ENCODE measurements at regions of chr10 and their contacts with region 1.

Region 1: GRCh38 chr10:89217057-89217990 is 10.2 kb upstream of the CH25H start:
- DNase-seq: no peak
- ATAC-seq: peak; percentile 55
- H3K4me3 ChIP-seq: no peak overlapping the region
- H3K27ac ChIP-seq: no peak overlapping the region
- H3K4me1 ChIP-seq: no peaks in the 10 kb centered on the region
- H3K27me3 ChIP-seq: no peaks in the 10 kb centered on the region

Region 2: GRCh38 chr10:89029785-89030437 is 187.4 kb before region 1 on chr10:
- intact Hi-C with region 1: loop called (anchors 2 kb)
- DNase-seq: peak; percentile 80 to 85
- ATAC-seq: peak; percentile 86
- H3K4me3 ChIP-seq: no peak overlapping the region
- H3K27ac ChIP-seq: no peak overlapping the region
- H3K4me1 ChIP-seq: peaks cover 0 to 2% of the 10 kb centered on the region in 2 donors
- H3K27me3 ChIP-seq: no peaks in the 10 kb centered on the region

Region 3: DNA sequence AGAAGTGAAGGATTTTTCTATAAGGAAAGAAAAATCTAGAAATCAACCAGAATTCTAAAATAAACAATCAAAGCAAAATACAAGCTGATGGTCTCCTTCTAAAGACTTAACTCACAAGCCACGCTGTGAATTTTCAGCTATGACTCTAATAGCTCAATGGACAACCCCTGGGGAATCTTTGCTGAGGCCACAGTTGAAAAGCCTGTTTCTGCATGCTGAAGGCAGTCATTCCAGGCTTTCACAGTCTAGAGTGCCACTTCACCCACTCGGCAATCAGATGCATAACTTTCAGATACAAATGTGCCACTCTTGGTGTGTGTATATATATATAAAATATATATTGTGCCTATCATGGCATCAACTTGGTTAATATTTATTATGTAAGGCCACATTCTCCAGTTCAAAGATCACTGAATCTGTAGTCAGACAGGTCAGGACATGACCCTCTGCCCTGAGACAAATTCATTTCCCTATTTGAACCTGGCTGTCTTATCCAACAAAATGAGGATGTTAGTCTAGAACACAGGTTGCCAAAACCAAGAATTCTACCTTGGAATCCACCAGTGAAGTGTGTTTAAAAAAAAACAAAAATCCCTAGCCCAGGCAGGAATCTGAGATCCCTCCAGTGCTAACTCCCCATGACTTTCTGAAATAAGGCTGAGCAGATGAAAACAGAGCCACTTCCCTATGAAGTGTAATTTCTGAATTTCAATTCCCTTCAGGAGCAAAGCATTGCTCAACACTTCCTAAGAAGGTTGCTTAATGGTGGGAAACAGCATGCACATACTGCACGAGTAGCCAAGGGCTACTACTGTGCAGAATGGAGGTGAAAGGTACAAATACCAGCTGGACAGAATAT is 24.4 kb after region 1 on chr10:
- intact Hi-C with region 1: no loop called
- DNase-seq: no peak
- ATAC-seq: peak; percentile 56
- H3K4me3 ChIP-seq: no peak overlapping the region
- H3K27ac ChIP-seq: no peak overlapping the region
- H3K4me1 ChIP-seq: no peaks in the 10 kb centered on the region
- H3K27me3 ChIP-seq: no peaks in the 10 kb centered on the region